GM10248 (cell line): ENCODE measurements at regions of chr15 and their contacts with region 1.

Region 1: GRCh38 chr15:99733268-99734039 is at the start of gene LYSMD4:
- DNase-seq: peak; percentile 100
- CTCF ChIP-seq: no peak

Region 2: DNA sequence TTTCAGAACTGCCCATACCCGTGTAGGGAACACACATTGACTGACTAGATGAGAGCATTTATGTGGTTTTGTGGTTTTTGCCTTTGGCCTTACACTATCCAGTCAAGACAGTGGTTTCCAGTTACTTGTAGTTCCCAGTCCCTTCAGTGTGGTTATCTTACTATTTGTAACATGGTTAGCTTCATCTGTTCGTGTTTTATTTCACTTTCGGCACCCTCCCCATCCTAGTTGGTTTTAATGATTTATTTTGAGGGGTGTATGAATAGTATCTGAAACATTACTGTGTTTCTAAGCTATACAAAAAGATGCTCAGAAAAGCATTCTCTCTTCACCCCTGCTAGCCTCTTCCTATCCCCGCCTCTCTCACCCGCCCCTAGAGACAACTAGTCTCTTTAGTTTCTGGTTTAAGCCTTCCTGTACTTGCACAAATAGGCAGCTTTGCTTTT is 14.3 kb before region 1 on chr15:
- CTCF ChIA-PET with region 1: interaction called, 22 read pairs
- POLR2A ChIA-PET with region 1: interaction called, 3 read pairs
- DNase-seq: peak; percentile 59
- CTCF ChIP-seq: no peak